Calu3 (cell line): ENCODE measurements at regions of chr10 and their contacts with region 1.

Region 1: DNA sequence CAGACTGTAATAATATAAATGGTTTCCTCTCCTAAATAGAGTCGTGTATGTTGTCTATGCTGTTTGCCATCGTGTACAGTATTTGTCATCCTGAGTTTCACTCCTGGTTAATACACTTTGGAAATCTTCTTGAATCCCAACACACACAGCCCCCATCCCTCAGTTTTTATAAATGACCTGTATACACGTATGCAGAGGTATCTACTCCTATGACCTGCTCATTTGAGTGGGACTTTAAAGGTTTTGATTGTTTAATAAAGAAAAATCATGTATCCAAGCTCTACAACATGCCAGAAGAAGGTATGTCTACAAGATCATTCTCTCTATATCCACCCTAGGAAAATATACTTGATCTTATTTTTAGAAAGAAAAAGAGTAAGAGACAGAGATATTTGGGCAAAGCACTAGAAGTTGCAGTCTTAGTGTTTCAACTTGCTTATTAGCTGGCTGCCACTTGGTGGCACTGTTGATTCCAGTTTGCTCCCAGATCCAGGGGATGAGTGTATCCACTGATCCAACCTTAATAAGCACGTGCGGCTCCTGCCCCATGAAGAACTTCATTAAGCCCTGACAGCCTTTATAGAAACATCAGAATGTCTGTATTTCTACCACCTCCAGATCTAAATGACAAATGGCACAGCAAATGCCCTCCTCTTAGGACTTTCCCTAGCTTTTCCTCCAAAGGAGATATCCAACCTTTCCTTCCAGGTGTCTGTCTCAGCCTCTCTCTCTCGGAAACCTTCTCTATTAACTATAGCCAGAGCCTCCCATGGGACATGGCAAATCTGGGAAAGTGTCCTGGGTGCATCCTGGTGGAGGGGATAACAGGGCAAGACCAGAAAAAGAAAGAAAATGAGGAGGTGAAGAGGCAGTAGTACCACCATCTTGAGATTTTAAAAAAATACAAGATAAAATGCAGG is 181.6 kb upstream of the NEBL start:
- DNase-seq: peak; percentile 73
- H3K4me3 Mint-ChIP-seq: no peak overlapping the region
- H3K27ac Mint-ChIP-seq: peak overlapping the region; percentile 47
- H3K4me1 Mint-ChIP-seq: peaks cover 9% of the 10 kb centered on the region
- H3K27me3 Mint-ChIP-seq: no peaks in the 10 kb centered on the region
- CTCF ChIP-seq: peak; percentile 73

Region 2: DNA sequence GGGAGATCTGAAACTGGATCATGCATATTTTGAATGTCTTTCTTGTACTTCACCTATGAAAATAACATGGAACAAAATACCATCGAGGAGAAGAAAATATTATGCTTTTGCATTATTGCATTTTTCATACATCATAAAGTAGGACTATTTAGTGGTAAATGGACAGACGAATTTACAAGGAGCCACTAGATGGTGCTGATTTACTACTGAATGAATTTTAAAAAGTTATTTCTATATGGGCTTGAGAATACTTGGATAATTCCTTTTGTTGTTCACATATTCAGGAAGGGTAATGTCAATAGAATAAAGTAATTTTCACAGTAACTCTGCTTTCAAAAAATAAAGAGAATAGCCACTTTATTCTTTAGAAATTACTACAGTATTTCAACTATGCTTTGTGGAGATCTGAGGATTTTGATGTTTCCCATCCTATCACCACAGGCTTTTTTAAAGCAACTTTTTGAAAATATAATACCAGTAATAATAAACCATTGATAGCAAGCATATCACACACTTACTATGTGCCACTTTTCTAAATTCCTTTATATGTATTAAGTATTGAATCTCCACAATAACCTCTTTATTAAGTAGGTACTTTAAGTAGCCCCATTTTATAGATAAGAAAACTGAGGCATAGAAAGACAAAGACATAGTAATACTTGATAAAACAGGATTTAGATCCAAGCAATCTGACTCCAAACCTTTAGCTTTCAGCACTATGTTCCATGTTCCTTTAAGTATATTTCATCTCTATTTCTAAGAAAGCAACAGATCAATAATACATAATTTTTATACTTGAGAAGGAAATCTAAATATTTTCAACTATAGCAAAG is 220.2 kb before region 1 on chr10:
- CTCF ChIA-PET with region 1: no interaction called
- intact Hi-C with region 1: loop called (anchors 5 kb)
- DNase-seq: no peak
- H3K4me3 Mint-ChIP-seq: no peak overlapping the region
- H3K27ac Mint-ChIP-seq: no peak overlapping the region
- H3K4me1 Mint-ChIP-seq: no peaks in the 10 kb centered on the region
- H3K27me3 Mint-ChIP-seq: no peaks in the 10 kb centered on the region
- CTCF ChIP-seq: no peak

Region 3: DNA sequence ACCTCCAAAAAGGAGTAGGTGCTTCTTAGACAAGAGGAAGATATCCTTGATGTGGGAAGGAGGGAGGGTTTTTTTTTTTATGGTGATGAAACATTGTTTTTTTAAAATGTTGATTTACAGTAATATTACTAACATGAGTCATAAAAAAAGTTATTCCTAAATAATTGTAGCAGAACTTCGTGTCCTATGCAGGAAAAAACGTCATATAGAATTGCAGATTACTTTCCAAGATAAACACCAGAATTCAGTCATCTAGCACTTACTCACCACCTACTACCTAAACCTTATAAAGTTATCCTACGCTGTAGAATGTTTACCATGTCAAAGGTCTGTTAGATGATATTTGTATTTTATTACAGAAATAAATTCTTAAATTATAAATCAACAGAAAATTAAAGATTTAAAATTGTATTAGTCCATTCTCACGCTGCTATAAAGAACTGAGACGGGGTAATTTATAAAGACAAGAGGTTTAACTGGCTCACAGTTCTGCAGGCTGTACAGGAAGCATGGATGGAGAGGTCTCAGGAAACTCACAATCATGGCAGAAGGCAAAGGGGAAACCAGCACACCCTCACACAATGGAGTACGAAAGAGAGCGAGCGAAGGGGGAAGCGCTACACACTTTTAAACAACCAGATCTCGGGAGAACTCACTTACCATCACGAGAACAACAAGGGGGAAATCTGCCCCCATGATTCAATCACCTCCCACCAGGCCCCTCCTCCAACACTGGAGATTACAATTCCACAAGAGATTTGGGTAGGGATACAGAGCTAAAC is 76.4 kb before region 1 on chr10:
- CTCF ChIA-PET with region 1: no interaction called
- intact Hi-C with region 1: no loop called
- DNase-seq: no peak
- H3K4me3 Mint-ChIP-seq: no peak overlapping the region
- H3K27ac Mint-ChIP-seq: no peak overlapping the region
- H3K4me1 Mint-ChIP-seq: peaks cover 20% of the 10 kb centered on the region
- H3K27me3 Mint-ChIP-seq: no peaks in the 10 kb centered on the region
- CTCF ChIP-seq: no peak

Region 4: DNA sequence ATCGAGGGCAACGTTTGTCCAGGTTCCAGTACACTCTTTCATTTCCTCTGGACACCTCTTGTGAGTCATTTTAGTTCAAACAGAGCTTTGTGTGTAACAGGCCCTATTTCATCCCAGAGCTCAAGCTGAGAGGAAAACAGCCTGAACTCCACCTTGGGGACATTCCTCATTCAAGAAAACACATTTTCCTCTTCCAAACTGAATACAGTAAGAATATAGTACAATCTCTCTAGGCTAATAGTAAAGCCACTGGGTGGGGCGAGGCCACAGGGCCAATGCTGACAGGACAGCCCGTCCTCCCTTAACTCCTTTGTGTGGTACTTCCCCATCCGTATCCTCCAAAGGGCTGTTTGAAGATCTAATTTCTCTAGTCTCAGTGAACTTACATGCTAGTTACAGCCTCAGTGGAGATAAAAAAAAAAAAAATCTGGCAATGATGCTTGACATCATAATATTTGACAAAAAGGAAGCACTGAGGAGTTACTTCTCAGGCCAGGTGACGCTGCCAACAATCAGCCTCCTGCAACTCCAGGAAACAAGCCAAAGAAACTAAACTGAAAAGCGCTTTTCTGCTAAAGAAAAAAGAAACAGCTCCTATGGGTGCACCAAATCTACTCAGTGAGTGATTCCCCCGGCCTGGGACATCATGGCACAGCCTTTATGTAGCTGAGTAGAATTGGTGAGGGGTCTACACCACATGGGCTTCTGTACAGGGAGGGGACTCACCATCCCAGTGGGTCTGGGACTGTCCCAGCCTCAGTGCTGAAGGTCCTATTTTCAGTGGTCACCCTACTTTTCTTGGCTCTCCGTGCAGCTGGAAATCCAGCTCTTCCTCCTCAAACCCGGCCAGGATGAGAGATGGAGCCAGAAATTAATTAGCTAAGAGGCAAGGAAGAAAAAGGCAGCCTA is 56.6 kb after region 1 on chr10:
- CTCF ChIA-PET with region 1: interaction called, 3 read pairs
- intact Hi-C with region 1: loop called (anchors 2 kb)
- DNase-seq: peak; percentile 28
- H3K4me3 Mint-ChIP-seq: peak overlapping the region; percentile 7
- H3K27ac Mint-ChIP-seq: peak overlapping the region; percentile 27
- H3K4me1 Mint-ChIP-seq: peaks cover 28% of the 10 kb centered on the region
- H3K27me3 Mint-ChIP-seq: no peaks in the 10 kb centered on the region
- CTCF ChIP-seq: no peak

Region 5: GRCh38 chr10:21173812-21174714 is 95.4 kb after region 1 on chr10:
- CTCF ChIA-PET with region 1: no interaction called
- intact Hi-C with region 1: loop called (anchors 5 kb)
- DNase-seq: peak; percentile 83
- H3K4me3 Mint-ChIP-seq: peak overlapping the region; percentile 96
- H3K27ac Mint-ChIP-seq: peak overlapping the region; percentile 88
- H3K4me1 Mint-ChIP-seq: peaks cover 19% of the 10 kb centered on the region
- H3K27me3 Mint-ChIP-seq: no peaks in the 10 kb centered on the region
- CTCF ChIP-seq: no peak

Region 6: GRCh38 chr10:21194464-21194993 is 115.9 kb after region 1 on chr10:
- CTCF ChIA-PET with region 1: no interaction called
- intact Hi-C with region 1: loop called (anchors 5 kb)
- DNase-seq: peak; percentile 81
- H3K4me3 Mint-ChIP-seq: peak overlapping the region; percentile 7
- H3K27ac Mint-ChIP-seq: peak overlapping the region; percentile 84
- H3K4me1 Mint-ChIP-seq: peaks cover 36% of the 10 kb centered on the region
- H3K27me3 Mint-ChIP-seq: no peaks in the 10 kb centered on the region
- CTCF ChIP-seq: no peak

Region 7: DNA sequence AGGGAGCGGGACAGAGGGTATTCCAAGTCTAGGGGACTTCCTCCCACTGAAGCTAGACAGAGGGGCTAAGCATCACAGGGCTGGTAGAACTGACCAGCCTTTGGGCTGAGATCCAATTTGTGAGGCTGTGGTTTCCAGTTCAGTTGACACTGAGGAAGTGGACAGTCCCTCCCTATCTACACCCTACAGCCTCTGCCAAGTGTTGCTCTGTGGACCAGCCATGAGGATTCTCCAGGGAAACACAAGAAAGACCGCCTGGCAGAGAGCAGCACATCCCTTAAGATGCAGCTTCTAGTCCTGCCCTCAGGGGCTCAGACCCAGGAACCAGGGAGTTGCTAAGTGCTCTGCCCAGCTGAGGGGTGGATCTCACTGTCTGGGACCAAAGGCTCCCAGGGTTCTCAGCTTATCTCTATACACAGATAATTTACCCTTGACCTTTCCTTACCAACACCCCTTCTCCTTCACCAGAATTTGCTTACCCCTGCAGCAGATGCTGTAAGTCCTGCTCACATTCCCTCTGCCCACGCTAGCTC is 194.8 kb after region 1 on chr10:
- CTCF ChIA-PET with region 1: interaction called, 5 read pairs
- intact Hi-C with region 1: loop called (anchors 1 kb)
- DNase-seq: no peak
- H3K4me3 Mint-ChIP-seq: no peak overlapping the region
- H3K27ac Mint-ChIP-seq: no peak overlapping the region
- H3K4me1 Mint-ChIP-seq: peaks cover 14% of the 10 kb centered on the region
- H3K27me3 Mint-ChIP-seq: no peaks in the 10 kb centered on the region
- CTCF ChIP-seq: no peak

Region 8: DNA sequence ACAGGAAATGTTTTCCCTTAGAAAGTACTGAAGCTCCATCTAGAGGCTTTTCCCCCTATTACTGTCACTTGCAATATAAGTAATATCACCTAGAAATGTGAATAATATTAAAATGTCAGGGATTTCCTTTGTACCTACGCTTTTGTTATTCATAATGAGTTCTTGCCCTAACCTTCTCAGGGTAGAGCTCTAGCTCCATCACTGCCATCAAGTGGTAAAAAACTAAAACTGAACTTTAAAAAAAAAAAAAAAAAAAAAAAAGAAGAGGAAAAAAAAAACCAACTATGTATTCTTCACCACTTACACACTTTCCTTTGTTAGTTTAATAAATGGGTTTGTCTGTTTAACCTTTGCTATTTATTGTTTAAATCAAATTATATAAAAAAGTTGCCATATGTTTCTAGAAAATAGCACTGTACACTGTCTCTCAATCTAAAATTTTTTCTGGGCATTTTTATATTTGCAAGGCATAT is 875.0 kb after region 1 on chr10:
- CTCF ChIA-PET with region 1: no interaction called
- intact Hi-C with region 1: loop called (anchors 10 kb)
- DNase-seq: no peak
- H3K4me3 Mint-ChIP-seq: no peak overlapping the region
- H3K27ac Mint-ChIP-seq: no peak overlapping the region
- H3K4me1 Mint-ChIP-seq: no peaks in the 10 kb centered on the region
- H3K27me3 Mint-ChIP-seq: no peaks in the 10 kb centered on the region
- CTCF ChIP-seq: no peak